Natural killer cell (primary cell): ENCODE measurements at regions of chr3 and their contacts with region 1.

Region 1: GRCh38 chr3:114152519-114153151 is 26.2 kb downstream of the DRD3 start:
- DNase-seq: peak; percentile 78 to 91
- ATAC-seq: peak; percentile 93 to 98 (median 98)
- H3K4me3 ChIP-seq: peak overlapping the region; percentile 28
- H3K4me3 Mint-ChIP-seq: peak overlapping the region; percentile 74
- H3K27ac ChIP-seq: peak overlapping the region; percentile 6
- H3K27ac Mint-ChIP-seq: peak overlapping the region; percentile 19 to 69
- H3K4me1 ChIP-seq: peaks cover 7% of the 10 kb centered on the region
- H3K4me1 Mint-ChIP-seq: peaks cover 8 to 10% of the 10 kb centered on the region in 2 donors
- H3K27me3 ChIP-seq: no peaks in the 10 kb centered on the region
- H3K27me3 Mint-ChIP-seq: peaks cover 0 to 3% of the 10 kb centered on the region in 2 donors
- CTCF ChIP-seq: peak; percentile 98

Region 2: DNA sequence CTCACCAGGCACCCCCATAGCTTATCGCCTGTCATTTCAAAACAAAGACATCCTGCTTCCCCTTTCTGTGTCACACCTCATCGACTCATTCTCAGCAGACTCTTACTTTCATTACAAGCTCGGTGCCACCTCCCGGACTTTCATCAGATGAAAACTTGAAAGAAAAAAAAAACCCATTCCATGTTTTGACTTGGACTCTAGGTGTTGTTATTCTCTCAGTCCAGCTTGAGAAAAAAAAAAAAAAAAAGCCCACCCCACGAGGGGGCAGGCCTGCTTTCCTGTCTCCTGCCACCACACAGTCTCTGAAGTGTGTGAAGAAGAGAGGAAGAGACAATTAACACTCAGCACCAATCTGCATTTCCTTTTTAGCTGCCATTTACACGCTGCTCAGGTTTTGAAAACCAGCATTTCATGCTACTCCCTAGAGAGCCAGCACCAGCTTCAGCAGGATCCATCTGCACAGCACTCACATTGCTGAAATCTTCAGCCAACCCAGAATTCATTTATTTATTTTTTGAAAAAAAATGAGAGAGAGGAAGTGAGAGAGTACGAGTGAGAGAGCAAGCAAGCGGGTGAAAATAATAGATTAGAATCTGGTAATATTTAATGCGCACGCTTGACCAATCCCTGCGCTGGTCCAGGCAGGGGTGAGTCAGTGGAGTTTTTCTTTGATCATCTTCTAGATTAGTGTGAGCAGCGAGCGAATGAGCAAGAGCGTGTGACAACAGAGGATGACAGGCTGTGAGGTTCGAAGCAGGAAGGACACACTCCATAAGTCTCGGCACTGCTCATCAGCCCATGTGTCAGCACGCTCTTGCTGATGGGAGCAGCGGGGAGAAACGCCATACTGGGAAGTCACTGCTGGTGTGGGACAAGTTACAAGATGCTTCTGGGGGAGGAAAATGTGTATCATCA is 61.2 kb after region 1 on chr3:
- intact Hi-C with region 1: loop called (anchors 5 kb)
- DNase-seq: peak; percentile 73 to 88
- ATAC-seq: peak; percentile 61 to 77 (median 63)
- H3K4me3 ChIP-seq: peak overlapping the region; percentile 46
- H3K4me3 Mint-ChIP-seq: no peak overlapping the region
- H3K27ac ChIP-seq: peak overlapping the region; percentile 97
- H3K27ac Mint-ChIP-seq: no peak overlapping the region
- H3K4me1 ChIP-seq: peaks cover 63% of the 10 kb centered on the region
- H3K4me1 Mint-ChIP-seq: no peaks in the 10 kb centered on the region
- H3K27me3 ChIP-seq: no peaks in the 10 kb centered on the region
- H3K27me3 Mint-ChIP-seq: no peaks in the 10 kb centered on the region
- CTCF ChIP-seq: peak; percentile 12

Region 3: DNA sequence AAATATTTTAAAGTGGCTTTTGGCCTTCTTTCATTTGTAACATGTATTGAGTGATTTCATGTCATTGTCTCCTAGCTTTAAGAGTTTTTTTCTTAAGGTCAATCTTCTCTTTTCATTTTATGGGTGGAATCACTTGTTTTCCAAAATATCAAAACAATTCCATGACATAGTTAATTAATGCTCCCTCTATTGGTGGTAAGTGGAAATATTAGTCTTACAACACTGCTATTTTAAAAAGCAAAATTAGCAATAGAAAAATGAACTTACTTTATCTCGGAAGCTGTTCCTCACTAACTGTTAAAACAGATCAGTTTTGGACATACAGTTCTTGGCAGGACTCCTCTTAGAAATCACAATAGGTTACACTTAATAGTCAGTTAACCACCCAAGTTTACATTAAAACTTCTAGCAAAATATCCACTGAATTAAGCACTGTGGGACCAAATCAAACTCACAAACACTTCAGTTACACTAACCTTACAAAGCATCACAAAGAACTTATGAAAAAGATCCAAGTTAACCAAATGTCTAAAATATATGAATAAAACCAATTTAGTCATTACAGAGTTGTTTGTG is 183.6 kb after region 1 on chr3:
- intact Hi-C with region 1: loop called (anchors 5 kb)
- DNase-seq: no peak
- ATAC-seq: no peak
- H3K4me3 ChIP-seq: no peak overlapping the region
- H3K4me3 Mint-ChIP-seq: no peak overlapping the region
- H3K27ac ChIP-seq: no peak overlapping the region
- H3K27ac Mint-ChIP-seq: peak overlapping the region in 1 of 2 donors; percentile 57
- H3K4me1 ChIP-seq: peaks cover 18% of the 10 kb centered on the region
- H3K4me1 Mint-ChIP-seq: peaks cover 35 to 54% of the 10 kb centered on the region in 2 donors
- H3K27me3 ChIP-seq: no peaks in the 10 kb centered on the region
- H3K27me3 Mint-ChIP-seq: no peaks in the 10 kb centered on the region
- CTCF ChIP-seq: peak; percentile 54